ENCODE measurements at regions of chr16 and their contacts with region 1.

Region 1: GRCh38 chr16:22001591-22001990 is 675 bp upstream of the PDZD9 start:
- DNase-seq: no peak
- ATAC-seq: no peak
- H3K4me3 ChIP-seq: no peak overlapping the region
- H3K27ac ChIP-seq: no peak overlapping the region
- H3K4me1 ChIP-seq: peaks cover 7% of the 10 kb centered on the region; the same call in 1 of the 3 replicates
- CTCF ChIP-seq: no peak
- EP300 ChIP-seq: no peak
- POLR2A ChIP-seq: no peak
- RAD21 ChIP-seq: no peak

Region 2: DNA sequence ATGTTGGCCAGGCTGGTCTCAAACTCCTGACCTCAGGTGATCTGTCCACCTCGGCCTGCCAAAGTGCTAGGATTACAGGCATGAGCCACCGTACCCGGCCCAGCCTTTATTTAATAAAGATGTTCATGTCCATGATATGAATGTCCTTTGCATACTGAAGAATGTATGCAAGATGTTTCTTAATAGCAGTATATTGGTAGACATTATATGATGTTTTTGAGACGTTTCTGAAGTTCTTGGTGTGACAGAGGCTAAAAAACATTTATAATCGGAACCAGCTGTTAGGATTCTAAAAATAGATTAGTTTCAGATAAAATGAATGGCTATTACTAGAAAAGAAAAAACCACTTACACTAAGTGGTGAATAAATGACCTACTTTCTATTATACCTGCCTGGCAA is 12.5 kb before region 1 on chr16:
- CTCF ChIA-PET with region 1: interaction called, 44 read pairs
- POLR2A ChIA-PET with region 1: no interaction called
- DNase-seq: no peak
- ATAC-seq: no peak
- H3K4me3 ChIP-seq: no peak overlapping the region
- H3K27ac ChIP-seq: no peak overlapping the region
- H3K4me1 ChIP-seq: no peaks in the 10 kb centered on the region
- CTCF ChIP-seq: no peak
- EP300 ChIP-seq: no peak
- POLR2A ChIP-seq: no peak
- RAD21 ChIP-seq: no peak

Region 3: GRCh38 chr16:22070361-22071330 is 69.1 kb after region 1 on chr16:
- CTCF ChIA-PET with region 1: interaction called, 12 read pairs
- POLR2A ChIA-PET with region 1: no interaction called
- DNase-seq: no peak
- ATAC-seq: no peak
- H3K4me3 ChIP-seq: no peak overlapping the region
- H3K27ac ChIP-seq: no peak overlapping the region
- H3K4me1 ChIP-seq: no peaks in the 10 kb centered on the region
- CTCF ChIP-seq: no peak
- EP300 ChIP-seq: no peak
- POLR2A ChIP-seq: no peak
- RAD21 ChIP-seq: no peak